Activated CD4-positive, alpha-beta memory T cell treated with anti-CD3 and anti-CD28 coated beads for 36 hours (primary cell): ENCODE measurements at regions of chr1 and their contacts with region 1.

Region 1: DNA sequence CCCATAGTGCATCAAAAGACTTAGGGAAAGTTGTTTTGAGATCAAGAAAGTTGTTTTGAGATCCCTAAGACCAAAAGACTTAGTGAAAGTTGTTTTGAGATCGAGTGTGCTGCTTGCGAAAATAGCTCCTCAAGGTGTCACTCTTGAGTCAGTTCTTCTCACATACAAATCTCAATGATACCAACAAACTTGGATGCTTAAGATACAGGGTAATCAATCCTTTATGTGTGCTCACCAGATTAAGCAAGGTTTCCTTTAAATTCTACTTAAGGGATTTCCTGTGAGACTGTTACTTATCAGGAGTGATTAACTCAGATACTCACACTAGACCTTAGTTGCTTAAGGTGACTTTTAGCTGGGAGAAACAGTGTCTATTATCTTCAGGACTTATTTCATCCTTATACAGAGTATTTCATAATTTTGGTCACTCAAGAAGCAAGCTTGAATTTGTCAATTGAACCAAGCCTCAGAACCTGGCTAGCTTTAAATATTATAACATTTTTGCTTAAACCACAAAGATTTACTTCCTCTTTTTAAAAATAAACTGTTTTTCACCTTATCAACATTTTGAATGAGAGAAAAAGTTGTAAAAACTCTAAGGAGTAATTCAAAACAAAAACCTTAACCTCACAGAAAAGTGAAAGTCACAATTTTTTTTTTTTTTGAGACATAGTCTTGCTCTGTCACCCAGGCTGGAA is 8.0 kb upstream of the RLF start:
- DNase-seq: peak; percentile 38
- H3K4me3 Mint-ChIP-seq: no peak overlapping the region
- H3K27ac Mint-ChIP-seq: no peak overlapping the region
- H3K4me1 Mint-ChIP-seq: peaks cover 5% of the 10 kb centered on the region
- H3K27me3 Mint-ChIP-seq: peaks cover 3% of the 10 kb centered on the region

Region 2: GRCh38 chr1:39540504-39541031 is 612.7 kb before region 1 on chr1:
- CTCF ChIA-PET with region 1: no interaction called
- POLR2A ChIA-PET with region 1: no interaction called
- intact Hi-C with region 1: no loop called
- DNase-seq: no peak
- H3K4me3 Mint-ChIP-seq: no peak overlapping the region
- H3K27ac Mint-ChIP-seq: no peak overlapping the region
- H3K4me1 Mint-ChIP-seq: no peaks in the 10 kb centered on the region
- H3K27me3 Mint-ChIP-seq: no peaks in the 10 kb centered on the region

Region 3: GRCh38 chr1:40122855-40123254 is 30.4 kb before region 1 on chr1:
- CTCF ChIA-PET with region 1: no interaction called
- POLR2A ChIA-PET with region 1: no interaction called
- intact Hi-C with region 1: no loop called
- DNase-seq: no peak
- H3K4me3 Mint-ChIP-seq: no peak overlapping the region
- H3K27ac Mint-ChIP-seq: no peak overlapping the region
- H3K4me1 Mint-ChIP-seq: no peaks in the 10 kb centered on the region
- H3K27me3 Mint-ChIP-seq: peaks cover 7% of the 10 kb centered on the region

Region 4: GRCh38 chr1:40185951-40186864 is 33.0 kb after region 1 on chr1:
- CTCF ChIA-PET with region 1: interaction called, 16 read pairs
- POLR2A ChIA-PET with region 1: no interaction called
- intact Hi-C with region 1: loop called (anchors 5 kb)
- DNase-seq: peak; percentile 75
- H3K4me3 Mint-ChIP-seq: peak overlapping the region; percentile 46
- H3K27ac Mint-ChIP-seq: peak overlapping the region; percentile 56
- H3K4me1 Mint-ChIP-seq: peaks cover 45% of the 10 kb centered on the region
- H3K27me3 Mint-ChIP-seq: no peaks in the 10 kb centered on the region

Region 5: DNA sequence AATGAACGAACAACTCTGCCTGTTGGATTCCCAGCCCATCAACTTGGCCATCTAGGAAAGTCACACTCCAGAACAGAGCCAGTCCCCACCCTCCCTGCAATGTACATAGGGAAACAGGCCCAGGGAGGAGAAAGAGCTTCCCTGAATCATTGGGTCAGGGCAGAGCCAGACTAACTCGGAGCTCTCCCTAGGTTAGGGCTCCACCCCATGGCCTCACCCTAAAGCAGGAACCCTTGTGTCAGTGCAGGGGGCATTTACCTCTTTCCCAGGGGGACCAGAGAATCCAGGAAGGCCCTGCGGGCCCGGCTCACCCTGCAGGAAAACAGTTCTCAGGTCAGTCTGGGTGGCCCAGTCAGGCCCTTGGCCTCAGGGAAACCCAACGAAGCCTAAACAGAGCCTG is 152.2 kb after region 1 on chr1:
- CTCF ChIA-PET with region 1: interaction called, 16 read pairs
- POLR2A ChIA-PET with region 1: no interaction called
- intact Hi-C with region 1: no loop called
- DNase-seq: peak; percentile 45
- H3K4me3 Mint-ChIP-seq: no peak overlapping the region
- H3K27ac Mint-ChIP-seq: no peak overlapping the region
- H3K4me1 Mint-ChIP-seq: no peaks in the 10 kb centered on the region
- H3K27me3 Mint-ChIP-seq: no peaks in the 10 kb centered on the region

Region 6: GRCh38 chr1:40385437-40386358 is 232.5 kb after region 1 on chr1:
- CTCF ChIA-PET with region 1: interaction called, 22 read pairs
- POLR2A ChIA-PET with region 1: interaction called, 3 read pairs
- intact Hi-C with region 1: no loop called
- DNase-seq: peak; percentile 77
- H3K4me3 Mint-ChIP-seq: peak overlapping the region; percentile 81
- H3K27ac Mint-ChIP-seq: peak overlapping the region; percentile 100
- H3K4me1 Mint-ChIP-seq: peaks cover 90% of the 10 kb centered on the region
- H3K27me3 Mint-ChIP-seq: no peaks in the 10 kb centered on the region

Region 7: GRCh38 chr1:40438391-40439015 is 285.3 kb after region 1 on chr1:
- CTCF ChIA-PET with region 1: interaction called, 6 read pairs
- POLR2A ChIA-PET with region 1: no interaction called
- intact Hi-C with region 1: loop called (anchors 10 kb)
- DNase-seq: no peak
- H3K4me3 Mint-ChIP-seq: no peak overlapping the region
- H3K27ac Mint-ChIP-seq: no peak overlapping the region
- H3K4me1 Mint-ChIP-seq: no peaks in the 10 kb centered on the region
- H3K27me3 Mint-ChIP-seq: no peaks in the 10 kb centered on the region